ENCODE measurements at regions of chr5 and their contacts with region 1.

Region 1: DNA sequence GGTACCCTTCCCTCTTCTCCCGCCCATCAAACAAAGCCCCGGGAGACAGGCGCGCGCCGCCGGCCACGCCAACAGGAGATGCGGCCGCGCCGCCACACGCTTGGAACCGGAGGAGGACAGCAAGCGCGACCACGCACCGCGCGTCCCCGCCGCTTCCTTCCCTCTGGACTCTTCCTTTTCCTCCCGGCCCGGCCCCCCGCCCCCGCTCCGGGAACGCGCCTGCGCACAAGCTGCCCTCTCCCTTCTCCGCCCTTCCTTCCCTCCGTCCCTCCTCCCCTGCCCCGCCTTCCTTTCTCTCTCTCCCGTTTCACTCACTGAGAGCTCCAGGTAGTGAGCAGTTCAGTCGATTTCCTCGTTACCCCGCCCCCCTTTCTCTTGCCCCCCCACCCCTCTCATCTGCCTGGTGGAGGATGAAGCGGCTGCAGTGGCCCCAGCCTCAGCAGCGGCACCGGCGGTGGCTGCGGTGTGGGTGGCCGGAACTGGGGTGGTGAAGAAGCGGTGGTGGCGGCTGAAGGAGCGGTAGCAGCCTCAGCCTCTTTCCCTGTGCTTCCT is at the start of gene RASA1:
- DNase-seq: peak; percentile 43 to 89 (median 70)
- ATAC-seq: peak; percentile 61
- H3K4me3 ChIP-seq: peak within 1 kb of the TSS; percentile 72
- H3K4me3 Mint-ChIP-seq: peak within 1 kb of the TSS; percentile 93
- H3K27ac ChIP-seq: peak within 1 kb of the TSS; percentile 36 to 77
- H3K27ac Mint-ChIP-seq: peak within 1 kb of the TSS; percentile 83
- H3K4me1 ChIP-seq: peaks cover 28% of the 10 kb centered on the region
- H3K4me1 Mint-ChIP-seq: peaks cover 34% of the 10 kb centered on the region
- H3K27me3 ChIP-seq: no peaks in the 10 kb centered on the region
- H3K27me3 Mint-ChIP-seq: no peaks in the 10 kb centered on the region
- CTCF ChIP-seq: no peak
- total RNA-seq, gene RASA1: 15.1 to 15.4 TPM

Region 2: DNA sequence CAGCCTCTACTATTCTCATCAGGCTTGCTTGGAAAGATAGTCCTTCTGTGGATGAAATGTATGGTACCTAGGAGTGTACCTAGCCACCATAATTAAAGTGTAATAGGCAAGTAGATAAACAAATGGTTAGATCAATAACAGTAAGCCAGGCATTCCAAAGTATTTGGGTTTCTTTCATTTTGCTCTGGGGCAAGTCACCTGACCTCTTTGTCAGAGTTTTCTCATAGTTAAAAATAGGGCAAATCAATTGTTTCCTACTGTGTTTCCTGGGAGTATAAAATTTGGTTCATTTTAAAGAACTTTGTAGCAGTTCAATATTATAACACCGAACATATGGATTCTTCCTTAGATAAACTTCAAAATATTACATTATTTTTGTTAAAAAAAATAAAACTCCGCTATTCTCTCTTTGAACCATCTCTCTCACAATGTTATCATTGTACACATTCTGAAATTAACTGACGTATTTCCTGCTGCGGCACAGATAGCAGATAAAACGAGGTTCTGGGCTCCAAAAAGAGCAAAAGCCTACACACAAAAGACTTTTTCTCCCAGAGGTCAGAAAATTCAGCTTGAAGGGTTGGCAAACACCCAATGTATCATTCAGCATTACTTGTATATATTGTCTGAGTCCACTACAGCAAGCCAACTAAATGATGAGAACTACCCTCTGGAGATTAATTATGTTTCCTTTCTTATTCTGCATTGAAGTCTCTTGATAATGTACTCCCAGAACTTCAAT is 382.0 kb before region 1 on chr5:
- CTCF ChIA-PET with region 1: no interaction called
- POLR2A ChIA-PET with region 1: no interaction called
- intact Hi-C with region 1: no loop called
- DNase-seq: no peak
- ATAC-seq: no peak
- H3K4me3 ChIP-seq: no peak overlapping the region
- H3K4me3 Mint-ChIP-seq: no peak overlapping the region
- H3K27ac ChIP-seq: no peak overlapping the region
- H3K27ac Mint-ChIP-seq: no peak overlapping the region
- H3K4me1 ChIP-seq: no peaks in the 10 kb centered on the region
- H3K4me1 Mint-ChIP-seq: no peaks in the 10 kb centered on the region
- H3K27me3 ChIP-seq: no peaks in the 10 kb centered on the region
- H3K27me3 Mint-ChIP-seq: no peaks in the 10 kb centered on the region
- CTCF ChIP-seq: no peak

Region 3: DNA sequence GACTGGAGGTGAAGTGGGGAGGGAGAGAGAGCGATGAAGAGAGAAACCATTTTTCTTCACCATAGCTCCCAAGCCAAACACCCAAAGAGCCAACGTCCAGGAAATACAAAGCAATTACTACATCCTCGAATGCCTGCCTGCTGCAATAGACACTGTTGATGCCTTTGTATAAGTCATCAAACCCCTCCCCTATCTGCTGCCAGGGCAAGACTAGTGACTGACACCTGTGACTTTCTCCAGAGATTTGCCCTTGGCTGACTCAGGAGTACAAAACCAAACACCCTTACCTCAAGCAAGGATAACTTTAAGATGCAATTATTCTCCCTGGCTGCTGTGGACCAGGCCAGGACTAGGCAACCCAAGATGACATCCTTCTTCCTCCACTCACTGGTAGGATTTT is 81.8 kb before region 1 on chr5:
- CTCF ChIA-PET with region 1: no interaction called
- POLR2A ChIA-PET with region 1: interaction called, 4 read pairs
- intact Hi-C with region 1: loop called in 1 of 2 experiments (anchors 10 kb)
- DNase-seq: no peak
- ATAC-seq: no peak
- H3K4me3 ChIP-seq: no peak overlapping the region
- H3K4me3 Mint-ChIP-seq: no peak overlapping the region
- H3K27ac ChIP-seq: no peak overlapping the region
- H3K27ac Mint-ChIP-seq: no peak overlapping the region
- H3K4me1 ChIP-seq: peaks cover 3% of the 10 kb centered on the region
- H3K4me1 Mint-ChIP-seq: peaks cover 24% of the 10 kb centered on the region
- H3K27me3 ChIP-seq: no peaks in the 10 kb centered on the region
- H3K27me3 Mint-ChIP-seq: no peaks in the 10 kb centered on the region
- CTCF ChIP-seq: no peak

Region 4: GRCh38 chr5:87307796-87308423 is 40.3 kb after region 1 on chr5:
- CTCF ChIA-PET with region 1: no interaction called
- POLR2A ChIA-PET with region 1: no interaction called
- intact Hi-C with region 1: loop called in 1 of 2 experiments (anchors 5 kb)
- DNase-seq: no peak
- ATAC-seq: no peak
- H3K4me3 ChIP-seq: no peak overlapping the region
- H3K4me3 Mint-ChIP-seq: no peak overlapping the region
- H3K27ac ChIP-seq: no peak overlapping the region
- H3K27ac Mint-ChIP-seq: no peak overlapping the region
- H3K4me1 ChIP-seq: no peaks in the 10 kb centered on the region
- H3K4me1 Mint-ChIP-seq: peaks cover 66% of the 10 kb centered on the region
- H3K27me3 ChIP-seq: no peaks in the 10 kb centered on the region
- H3K27me3 Mint-ChIP-seq: no peaks in the 10 kb centered on the region
- CTCF ChIP-seq: no peak

Region 5: GRCh38 chr5:87354496-87354895 is 86.8 kb after region 1 on chr5:
- CTCF ChIA-PET with region 1: no interaction called
- POLR2A ChIA-PET with region 1: no interaction called
- intact Hi-C with region 1: no loop called
- DNase-seq: no peak
- ATAC-seq: no peak
- H3K4me3 ChIP-seq: no peak overlapping the region
- H3K4me3 Mint-ChIP-seq: no peak overlapping the region
- H3K27ac ChIP-seq: no peak overlapping the region
- H3K27ac Mint-ChIP-seq: peak overlapping the region; percentile 12
- H3K4me1 ChIP-seq: no peaks in the 10 kb centered on the region
- H3K4me1 Mint-ChIP-seq: peaks cover 31% of the 10 kb centered on the region
- H3K27me3 ChIP-seq: no peaks in the 10 kb centered on the region
- H3K27me3 Mint-ChIP-seq: no peaks in the 10 kb centered on the region
- CTCF ChIP-seq: no peak

Region 6: DNA sequence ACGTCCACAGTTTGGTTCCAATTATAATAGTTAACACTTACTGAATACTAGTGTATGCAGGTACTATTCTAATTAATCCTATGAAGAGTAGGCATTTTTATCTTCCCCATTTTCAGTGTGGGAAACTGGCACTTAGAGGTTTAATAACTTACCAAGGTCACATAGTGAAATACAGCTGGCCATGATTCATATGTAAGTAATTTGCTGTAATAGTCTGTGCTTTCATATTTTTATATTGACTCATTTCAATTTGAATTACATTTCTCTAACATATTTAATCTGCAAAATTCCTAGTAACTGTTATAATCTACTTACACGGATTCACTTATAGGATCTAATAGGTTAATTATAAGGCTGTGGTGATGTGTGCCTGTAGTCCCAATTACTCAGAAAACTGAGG is 125.7 kb after region 1 on chr5:
- CTCF ChIA-PET with region 1: no interaction called
- POLR2A ChIA-PET with region 1: no interaction called
- intact Hi-C with region 1: loop called (anchors 5 to 10 kb)
- DNase-seq: no peak
- ATAC-seq: no peak
- H3K4me3 ChIP-seq: no peak overlapping the region
- H3K4me3 Mint-ChIP-seq: no peak overlapping the region
- H3K27ac ChIP-seq: no peak overlapping the region
- H3K27ac Mint-ChIP-seq: no peak overlapping the region
- H3K4me1 ChIP-seq: no peaks in the 10 kb centered on the region
- H3K4me1 Mint-ChIP-seq: peaks cover 42% of the 10 kb centered on the region
- H3K27me3 ChIP-seq: no peaks in the 10 kb centered on the region
- H3K27me3 Mint-ChIP-seq: no peaks in the 10 kb centered on the region
- CTCF ChIP-seq: no peak

Measured in CD4-positive, alpha-beta T cell (primary cell).